CD4-positive, alpha-beta memory T cell (primary cell): ENCODE measurements at regions of chr19 and their contacts with region 1.

Region 1: GRCh38 chr19:12610540-12611360 is at the starts of genes ZNF490 and ZNF791:
- DNase-seq: peak; percentile 93 to 98 (median 94)
- H3K4me3 ChIP-seq: peak within 1 kb of the TSS; percentile 89 to 100
- H3K4me3 Mint-ChIP-seq: peak within 1 kb of the TSS; percentile 99 to 100 (median 100)
- H3K27ac ChIP-seq: peak within 1 kb of the TSS; percentile 88
- H3K27ac Mint-ChIP-seq: peak within 1 kb of the TSS; percentile 99 to 100 (median 100)
- H3K4me1 ChIP-seq: peaks cover 57% of the 10 kb centered on the region
- H3K4me1 Mint-ChIP-seq: peaks cover 21 to 59% (median 35%) of the 10 kb centered on the region in 4 donors
- H3K27me3 ChIP-seq: no peaks in the 10 kb centered on the region
- H3K27me3 Mint-ChIP-seq: no peaks in the 10 kb centered on the region
- total RNA-seq, gene ZNF490: 10.6 to 11.8 TPM
- total RNA-seq, gene ZNF791: 46.0 to 46.3 TPM

Region 2: DNA sequence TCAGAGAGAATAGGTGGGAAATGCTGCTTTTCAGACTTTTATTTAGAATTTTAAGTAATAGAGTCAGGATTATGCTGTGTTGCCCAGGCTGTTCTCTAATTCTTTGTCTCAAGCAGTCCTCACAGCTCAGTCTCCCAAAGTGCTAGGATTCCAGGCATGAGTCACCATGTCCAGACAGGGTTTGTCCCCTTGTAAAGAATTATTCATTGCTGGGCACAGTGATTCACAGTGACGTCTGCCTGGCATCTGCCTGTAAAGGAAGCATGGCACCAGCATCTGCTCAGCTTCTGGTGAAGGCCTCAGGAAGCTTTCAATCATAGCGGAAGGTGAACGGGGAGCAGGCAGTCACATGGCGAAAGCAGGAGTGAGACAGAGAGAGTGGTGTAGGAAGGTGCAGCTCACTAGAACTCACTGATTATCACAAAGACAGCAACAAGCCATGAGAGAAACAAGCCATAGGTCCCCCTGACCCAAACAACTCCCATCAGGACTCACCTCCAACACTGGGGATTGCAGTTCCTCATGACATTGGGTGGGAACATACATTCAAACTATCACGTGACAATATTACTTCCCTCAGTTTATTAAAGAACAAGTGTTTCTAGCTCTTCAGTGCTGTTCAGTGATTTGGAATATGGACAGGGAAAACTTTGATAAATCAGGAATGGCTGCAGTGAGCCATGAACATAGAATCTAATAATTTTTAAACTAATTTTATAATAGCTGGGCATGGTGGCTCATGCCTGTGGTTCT is 628.0 kb before region 1 on chr19:
- CTCF ChIA-PET with region 1: no interaction called
- POLR2A ChIA-PET with region 1: no interaction called
- intact Hi-C with region 1: no loop called
- DNase-seq: no peak
- H3K4me3 ChIP-seq: no peak overlapping the region
- H3K4me3 Mint-ChIP-seq: no peak overlapping the region
- H3K27ac ChIP-seq: no peak overlapping the region
- H3K27ac Mint-ChIP-seq: no peak overlapping the region
- H3K4me1 ChIP-seq: peaks cover 7% of the 10 kb centered on the region
- H3K4me1 Mint-ChIP-seq: peaks cover 0 to 6% (median 3%) of the 10 kb centered on the region in 4 donors
- H3K27me3 ChIP-seq: no peaks in the 10 kb centered on the region
- H3K27me3 Mint-ChIP-seq: no peaks in the 10 kb centered on the region

Region 3: GRCh38 chr19:12564016-12564664 is 46.6 kb before region 1 on chr19:
- CTCF ChIA-PET with region 1: interaction called, 8 read pairs
- POLR2A ChIA-PET with region 1: interaction called, 4 read pairs
- intact Hi-C with region 1: loop called (anchors 1 kb)
- DNase-seq: peak; percentile 84 to 90 (median 85)
- H3K4me3 ChIP-seq: no peak overlapping the region
- H3K4me3 Mint-ChIP-seq: peak overlapping the region in 1 of 8 donors; percentile 33
- H3K27ac ChIP-seq: no peak overlapping the region
- H3K27ac Mint-ChIP-seq: peak overlapping the region in 1 of 7 donors; percentile 53
- H3K4me1 ChIP-seq: no peaks in the 10 kb centered on the region
- H3K4me1 Mint-ChIP-seq: peaks cover 4 to 5% (median 5%) of the 10 kb centered on the region in 4 donors
- H3K27me3 ChIP-seq: no peaks in the 10 kb centered on the region
- H3K27me3 Mint-ChIP-seq: no peaks in the 10 kb centered on the region

Region 4: GRCh38 chr19:12628040-12629022 is 17.6 kb after region 1 on chr19:
- CTCF ChIA-PET with region 1: interaction called, 4 read pairs
- POLR2A ChIA-PET with region 1: interaction called, 3 read pairs
- intact Hi-C with region 1: loop called (anchors 2 kb)
- DNase-seq: no peak
- H3K4me3 ChIP-seq: no peak overlapping the region
- H3K4me3 Mint-ChIP-seq: no peak overlapping the region
- H3K27ac ChIP-seq: no peak overlapping the region
- H3K27ac Mint-ChIP-seq: no peak overlapping the region
- H3K4me1 ChIP-seq: no peaks in the 10 kb centered on the region
- H3K4me1 Mint-ChIP-seq: peaks cover 0 to 5% (median 2%) of the 10 kb centered on the region in 4 donors
- H3K27me3 ChIP-seq: no peaks in the 10 kb centered on the region
- H3K27me3 Mint-ChIP-seq: no peaks in the 10 kb centered on the region

Region 5: DNA sequence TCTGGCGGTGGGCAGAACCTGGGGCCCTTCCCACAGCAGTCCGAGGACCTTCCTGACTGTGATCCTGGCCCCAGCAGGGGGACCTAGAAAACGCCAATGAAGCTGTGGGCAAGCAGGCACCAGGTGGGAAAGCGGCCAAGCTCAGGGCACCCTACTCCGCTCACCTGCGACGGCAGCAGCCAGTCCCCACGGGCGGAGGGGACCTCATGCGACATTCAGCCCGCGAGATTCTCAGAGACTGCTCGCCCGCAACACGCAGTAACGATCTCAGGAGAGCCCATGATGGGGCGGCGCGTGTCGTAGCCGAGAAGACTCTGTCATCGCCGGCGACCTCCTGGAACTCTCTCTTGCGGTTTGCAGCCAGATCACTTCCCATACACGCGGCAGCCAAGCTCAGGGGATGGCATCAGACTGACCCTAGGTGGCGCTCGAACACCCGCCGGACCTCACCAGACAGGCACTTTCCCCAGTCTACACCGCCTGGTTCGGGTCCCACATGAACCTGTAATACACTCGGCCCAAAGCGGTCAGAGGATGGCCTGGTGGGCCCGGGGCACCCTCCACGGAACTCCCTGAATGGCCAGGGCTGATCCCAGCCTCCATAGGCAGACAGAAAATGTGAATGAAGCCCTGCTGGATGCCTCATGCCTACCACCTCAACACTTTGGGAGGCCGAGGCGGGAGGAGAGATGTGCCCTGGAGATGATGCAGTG is 29.3 kb after region 1 on chr19:
- CTCF ChIA-PET with region 1: interaction called, 10 read pairs
- POLR2A ChIA-PET with region 1: interaction called, 9 read pairs
- intact Hi-C with region 1: no loop called
- DNase-seq: peak; percentile 71 to 82 (median 75)
- H3K4me3 ChIP-seq: no peak overlapping the region
- H3K4me3 Mint-ChIP-seq: peak overlapping the region; percentile 68 to 82 (median 76)
- H3K27ac ChIP-seq: no peak overlapping the region
- H3K27ac Mint-ChIP-seq: peak overlapping the region; percentile 14 to 92 (median 54)
- H3K4me1 ChIP-seq: peaks cover 18% of the 10 kb centered on the region
- H3K4me1 Mint-ChIP-seq: peaks cover 11 to 15% (median 14%) of the 10 kb centered on the region in 4 donors
- H3K27me3 ChIP-seq: no peaks in the 10 kb centered on the region
- H3K27me3 Mint-ChIP-seq: no peaks in the 10 kb centered on the region

Region 6: DNA sequence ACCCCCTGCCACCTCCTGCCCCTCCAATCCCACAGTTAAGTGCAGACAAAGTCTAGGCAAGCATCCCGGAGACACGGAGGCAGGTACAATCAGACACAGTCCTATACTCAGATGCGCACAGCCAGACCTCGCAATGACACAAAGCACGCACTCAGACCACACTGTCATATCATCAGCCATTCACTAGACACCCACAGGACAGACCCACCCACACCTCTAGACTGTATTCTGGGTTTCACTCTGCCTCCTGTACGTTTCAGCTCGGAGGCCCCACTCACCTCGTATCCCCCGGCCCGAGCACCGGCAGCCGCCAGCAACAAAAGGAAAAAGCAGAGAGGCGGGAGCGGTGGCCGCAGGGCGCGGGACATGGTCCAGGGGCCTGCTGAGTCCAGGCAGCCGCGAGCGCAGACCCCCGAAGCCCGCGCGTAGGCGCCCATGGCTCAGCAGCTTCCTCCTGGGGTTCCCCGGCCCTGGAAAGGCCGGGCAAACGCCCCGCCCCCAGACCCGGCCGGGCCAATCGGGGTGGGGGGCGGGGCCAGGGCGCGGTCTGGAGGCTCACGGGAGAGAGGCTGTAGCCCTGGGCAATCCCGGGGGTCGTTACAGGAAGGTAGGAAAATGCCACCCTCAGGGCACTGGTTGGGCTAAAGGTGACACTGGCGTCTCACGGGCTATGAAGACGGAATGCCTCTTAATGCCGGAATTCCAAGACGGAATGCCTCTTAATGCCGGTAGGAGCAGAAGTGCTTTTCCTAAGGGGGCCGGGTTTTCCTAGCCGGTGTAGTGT is 55.7 kb after region 1 on chr19 and contains the starts of genes MAN2B1 and WDR83:
- CTCF ChIA-PET with region 1: interaction called, 6 read pairs
- POLR2A ChIA-PET with region 1: interaction called, 16 read pairs
- intact Hi-C with region 1: loop called (anchors 2 kb)
- DNase-seq: peak; percentile 73 to 81 (median 78)
- H3K4me3 ChIP-seq: peak within 1 kb of the TSS; percentile 65 to 91
- H3K4me3 Mint-ChIP-seq: peak within 1 kb of the TSS; percentile 91 to 99 (median 94)
- H3K27ac ChIP-seq: peak within 1 kb of the TSS; percentile 98
- H3K27ac Mint-ChIP-seq: peak within 1 kb of the TSS; percentile 90 to 99 (median 97)
- H3K4me1 ChIP-seq: peaks cover 52% of the 10 kb centered on the region
- H3K4me1 Mint-ChIP-seq: peaks cover 24 to 70% (median 46%) of the 10 kb centered on the region in 4 donors
- H3K27me3 ChIP-seq: no peaks in the 10 kb centered on the region
- H3K27me3 Mint-ChIP-seq: no peaks in the 10 kb centered on the region
- total RNA-seq, gene MAN2B1: 137 to 141 TPM
- total RNA-seq, gene WDR83: 18.3 to 19.3 TPM

Region 7: DNA sequence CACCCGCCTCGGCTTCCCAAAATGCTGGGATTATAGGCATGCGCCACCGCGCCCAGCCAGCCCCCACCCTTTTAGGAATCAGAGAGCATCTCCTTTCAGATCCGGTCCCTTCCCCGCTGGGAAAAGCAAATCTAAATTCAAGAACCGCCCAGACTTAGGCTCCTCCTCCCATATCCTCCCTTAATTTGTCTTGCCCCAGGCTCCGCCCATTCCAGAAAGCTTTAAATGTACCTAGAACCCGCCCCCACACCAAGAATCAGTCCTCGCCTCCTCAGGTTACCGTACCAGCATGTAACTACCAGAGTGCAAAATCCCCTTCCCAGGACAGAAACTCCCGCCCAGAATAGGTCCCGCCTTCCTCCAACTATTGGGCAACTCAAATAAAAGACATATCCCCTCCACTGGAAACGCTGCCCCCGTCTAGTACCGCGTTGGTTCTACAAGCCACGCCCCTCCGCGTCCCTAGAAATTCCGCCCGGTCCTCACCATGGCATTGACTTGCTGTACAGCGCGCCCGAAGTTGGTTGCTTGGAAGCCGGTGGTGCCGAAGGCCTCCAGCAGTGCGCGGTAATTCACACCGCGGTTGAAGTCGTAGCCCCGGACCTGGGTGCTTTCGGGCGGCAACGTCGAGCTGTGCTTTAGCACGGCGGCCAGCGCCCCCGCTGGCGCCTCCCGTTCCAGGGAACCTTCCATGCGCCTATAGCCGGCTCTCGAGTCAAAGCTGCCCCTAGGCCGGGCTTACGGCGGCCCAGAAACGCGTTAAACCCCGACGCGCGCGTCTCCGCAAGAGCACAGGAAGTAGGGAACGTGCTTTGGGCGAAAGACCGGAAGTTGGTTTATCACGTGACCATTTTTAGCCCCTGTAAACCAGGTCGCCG is 70.6 kb after region 1 on chr19 and contains the start of gene DHPS:
- CTCF ChIA-PET with region 1: interaction called, 4 read pairs
- POLR2A ChIA-PET with region 1: interaction called, 13 read pairs
- intact Hi-C with region 1: loop called (anchors 5 kb)
- DNase-seq: peak; percentile 90 to 96 (median 94)
- H3K4me3 ChIP-seq: peak within 1 kb of the TSS; percentile 73 to 98
- H3K4me3 Mint-ChIP-seq: peak within 1 kb of the TSS; percentile 90 to 99 (median 98)
- H3K27ac ChIP-seq: peak within 1 kb of the TSS; percentile 98
- H3K27ac Mint-ChIP-seq: peak within 1 kb of the TSS; percentile 83 to 99 (median 97)
- H3K4me1 ChIP-seq: peaks cover 22% of the 10 kb centered on the region
- H3K4me1 Mint-ChIP-seq: peaks cover 12 to 35% (median 25%) of the 10 kb centered on the region in 4 donors
- H3K27me3 ChIP-seq: no peaks in the 10 kb centered on the region
- H3K27me3 Mint-ChIP-seq: no peaks in the 10 kb centered on the region
- total RNA-seq, gene DHPS: 195 to 197 TPM